ENCODE measurements at regions of chr19 and their contacts with region 1.

Region 1: DNA sequence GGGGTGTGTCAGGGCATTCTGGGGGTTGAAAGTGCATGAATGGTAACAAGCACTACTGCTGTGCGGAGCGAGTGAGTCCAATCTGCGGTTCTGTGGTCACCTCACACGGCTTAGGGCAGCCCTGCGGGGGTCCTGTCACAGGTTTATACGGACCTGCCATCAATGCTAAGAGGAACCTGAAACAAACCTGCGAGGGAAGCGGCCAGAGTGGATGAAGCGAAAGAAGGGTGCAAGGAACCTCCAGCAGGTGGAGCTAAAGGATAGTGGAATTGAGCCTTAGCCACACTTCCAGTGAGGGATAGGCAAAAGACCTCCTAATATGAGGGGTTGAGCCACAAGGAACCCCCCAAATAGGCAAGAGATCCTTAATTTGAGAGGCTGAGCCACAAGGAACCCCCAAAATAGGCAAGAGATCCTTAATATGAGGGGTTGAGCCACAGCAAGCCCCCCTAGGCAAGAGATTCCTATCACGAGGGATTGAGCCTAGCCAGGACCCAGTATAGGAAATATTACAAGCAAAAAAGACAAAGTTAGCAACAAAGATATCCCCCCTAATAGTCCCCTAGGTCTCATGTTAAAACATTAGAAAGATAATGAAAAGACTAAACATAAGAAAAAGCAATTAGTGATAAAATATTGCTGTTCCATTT is 6.3 kb upstream of the ZNF69 start:
- DNase-seq: peak; percentile 26 to 61
- H3K4me3 ChIP-seq: no peak overlapping the region
- H3K27ac ChIP-seq: no peak overlapping the region
- H3K4me1 ChIP-seq: no peaks in the 10 kb centered on the region
- H3K27me3 ChIP-seq: no peaks in the 10 kb centered on the region
- CTCF ChIP-seq: peak; percentile 17 to 71 (median 65)
- POLR2A ChIP-seq: no peak

Region 2: GRCh38 chr19:10106100-10106936 is 1775.0 kb before region 1 on chr19 and contains the start of gene PPAN:
- intact Hi-C with region 1: no loop called
- DNase-seq: peak; percentile 97 to 98
- H3K4me3 ChIP-seq: peak within 1 kb of the TSS; percentile 71 to 92 (median 74)
- H3K27ac ChIP-seq: peak within 1 kb of the TSS; percentile 62 to 84
- H3K4me1 ChIP-seq: peaks cover 0 to 8% of the 10 kb centered on the region in 2 donors
- H3K27me3 ChIP-seq: no peaks in the 10 kb centered on the region
- CTCF ChIP-seq: no peak
- POLR2A ChIP-seq: no peak
- total RNA-seq, gene PPAN: 17.1 to 44.2 (median 35.3) TPM

Region 3: DNA sequence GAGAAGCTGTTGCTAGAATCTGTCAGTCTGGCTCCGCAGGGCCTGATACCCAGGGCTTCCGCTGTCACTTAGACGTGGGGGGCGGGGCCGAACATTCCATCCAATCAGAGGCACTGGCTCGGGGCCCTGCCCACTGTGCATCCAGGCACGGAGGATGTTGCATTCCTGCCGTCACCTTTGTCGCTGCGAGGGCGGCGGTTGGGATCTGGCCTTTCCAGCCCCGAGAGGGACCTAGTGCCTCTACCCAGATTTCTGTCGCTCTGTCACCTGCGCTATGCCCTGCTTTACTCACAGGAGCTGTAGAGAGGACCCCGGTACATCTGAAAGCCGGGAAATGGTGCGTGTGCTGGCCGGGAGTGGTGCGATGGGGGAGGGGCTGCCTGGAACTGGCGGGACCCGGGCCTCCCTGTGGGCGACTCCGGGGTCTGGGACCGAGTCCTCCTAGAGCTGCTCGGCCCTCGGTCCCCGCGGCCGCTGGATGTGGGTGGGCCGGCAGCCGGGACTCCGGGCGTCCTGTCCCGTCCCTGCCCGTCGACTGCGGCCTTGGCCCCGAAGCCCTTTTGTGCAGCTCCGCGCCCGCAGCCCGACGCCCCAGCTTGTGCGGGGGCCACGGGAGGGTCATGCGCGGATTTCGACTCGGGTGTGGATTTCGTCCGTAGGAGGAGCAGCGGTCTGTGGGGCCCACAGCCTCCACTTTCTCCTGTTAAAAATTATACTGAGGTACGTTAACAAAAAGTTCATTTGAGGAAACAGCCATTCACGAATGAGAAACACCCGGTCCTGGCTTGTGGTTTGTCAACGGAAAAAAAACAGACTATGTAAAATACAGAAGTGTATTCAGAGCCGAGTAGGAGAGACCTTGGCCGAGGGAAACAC is 32.4 kb before region 1 on chr19 and contains the start of gene ZNF439:
- intact Hi-C with region 1: loop called (anchors 1 kb)
- DNase-seq: peak; percentile 92 to 94
- H3K4me3 ChIP-seq: peak within 1 kb of the TSS; percentile 58 to 81 (median 71)
- H3K27ac ChIP-seq: peak within 1 kb of the TSS; percentile 72 to 77
- H3K4me1 ChIP-seq: no peaks in the 10 kb centered on the region
- H3K27me3 ChIP-seq: no peaks in the 10 kb centered on the region
- CTCF ChIP-seq: peak in 1 of 3 donors; percentile 12
- POLR2A ChIP-seq: no peak
- total RNA-seq, gene ZNF439: 5.1 to 20.8 (median 13.8) TPM

Measured in breast epithelium (tissue), 4 donors.